Activated CD8-positive, alpha-beta T cell treated with anti-CD3 and anti-CD28 coated beads for 36 hours (primary cell): ENCODE measurements at regions of chr6 and their contacts with region 1.

Region 1: GRCh38 chr6:25882051-25882496 is 8.0 kb upstream of the SLC17A3 start:
- DNase-seq: peak; percentile 53
- ATAC-seq: peak; percentile 92
- H3K4me3 Mint-ChIP-seq: peak overlapping the region; percentile 70
- H3K27ac Mint-ChIP-seq: peak overlapping the region; percentile 23
- H3K4me1 Mint-ChIP-seq: peaks cover 3% of the 10 kb centered on the region
- H3K27me3 Mint-ChIP-seq: peaks cover 3% of the 10 kb centered on the region
- CTCF ChIP-seq: peak; percentile 45

Region 2: GRCh38 chr6:25788305-25788922 is 93.7 kb before region 1 on chr6:
- CTCF ChIA-PET with region 1: interaction called, 10 read pairs
- POLR2A ChIA-PET with region 1: no interaction called
- intact Hi-C with region 1: no loop called
- DNase-seq: peak; percentile 51
- ATAC-seq: peak; percentile 56
- H3K4me3 Mint-ChIP-seq: no peak overlapping the region
- H3K27ac Mint-ChIP-seq: no peak overlapping the region
- H3K4me1 Mint-ChIP-seq: no peaks in the 10 kb centered on the region
- H3K27me3 Mint-ChIP-seq: no peaks in the 10 kb centered on the region
- CTCF ChIP-seq: peak; percentile 66

Region 3: GRCh38 chr6:25899123-25899522 is 17.0 kb after region 1 on chr6:
- CTCF ChIA-PET with region 1: interaction called, 15 read pairs
- POLR2A ChIA-PET with region 1: no interaction called
- intact Hi-C with region 1: no loop called
- DNase-seq: no peak
- ATAC-seq: no peak
- H3K4me3 Mint-ChIP-seq: no peak overlapping the region
- H3K27ac Mint-ChIP-seq: no peak overlapping the region
- H3K4me1 Mint-ChIP-seq: peaks cover 2% of the 10 kb centered on the region
- H3K27me3 Mint-ChIP-seq: peaks cover 5% of the 10 kb centered on the region
- CTCF ChIP-seq: no peak